ENCODE measurements at regions of chr12 and their contacts with region 1.

Region 1: GRCh38 chr12:32365473-32366064 is 33.8 kb upstream of the FGD4 start:
- DNase-seq: peak; percentile 55
- H3K4me3 ChIP-seq: no peak overlapping the region
- H3K27ac ChIP-seq: no peak overlapping the region
- H3K4me1 ChIP-seq: peaks cover 0 to 5% of the 10 kb centered on the region in 2 experiments; a peak in 3 of 4 replicates
- H3K27me3 ChIP-seq: no peaks in the 10 kb centered on the region
- CTCF ChIP-seq: peak; percentile 93
- EP300 ChIP-seq: no peak
- RAD21 ChIP-seq: peak; percentile 88

Region 2: GRCh38 chr12:32252199-32253073 is 113.1 kb before region 1 on chr12:
- CTCF ChIA-PET with region 1: no interaction called
- POLR2A ChIA-PET with region 1: no interaction called
- DNase-seq: no peak
- H3K4me3 ChIP-seq: no peak overlapping the region
- H3K27ac ChIP-seq: no peak overlapping the region
- H3K4me1 ChIP-seq: peaks cover 0 to 9% of the 10 kb centered on the region in 2 experiments; a peak in 1 of 4 replicates
- H3K27me3 ChIP-seq: no peaks in the 10 kb centered on the region
- CTCF ChIP-seq: no peak
- EP300 ChIP-seq: no peak
- RAD21 ChIP-seq: no peak

Region 3: DNA sequence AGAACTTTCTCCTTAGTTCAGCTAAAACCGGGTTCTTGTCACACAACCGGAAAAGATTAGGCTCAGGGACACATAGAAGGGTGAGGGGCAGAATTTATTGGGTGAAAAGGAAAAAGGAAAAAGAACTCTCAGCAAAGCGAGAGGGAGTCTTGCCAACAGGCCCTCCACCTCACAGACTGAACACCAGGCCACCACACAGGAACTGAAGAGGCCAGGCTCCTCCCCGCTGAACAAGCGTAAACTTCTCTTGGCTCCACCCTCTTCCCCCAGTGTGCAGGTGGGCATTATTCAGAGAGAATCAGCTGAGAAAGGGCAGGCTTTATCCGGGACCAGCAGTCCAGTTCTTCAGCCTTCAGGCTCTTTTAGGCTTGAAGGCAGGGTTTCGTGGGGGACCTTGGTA is 91.9 kb before region 1 on chr12:
- CTCF ChIA-PET with region 1: no interaction called
- POLR2A ChIA-PET with region 1: no interaction called
- DNase-seq: no peak
- H3K4me3 ChIP-seq: no peak overlapping the region
- H3K27ac ChIP-seq: no peak overlapping the region; a peak in 1 of 4 replicates
- H3K4me1 ChIP-seq: peaks cover 19 to 29% of the 10 kb centered on the region in 2 experiments
- H3K27me3 ChIP-seq: no peaks in the 10 kb centered on the region
- CTCF ChIP-seq: no peak
- EP300 ChIP-seq: no peak
- RAD21 ChIP-seq: no peak

Region 4: GRCh38 chr12:32353540-32353939 is 12.0 kb before region 1 on chr12:
- CTCF ChIA-PET with region 1: interaction called, 11 read pairs
- POLR2A ChIA-PET with region 1: no interaction called
- DNase-seq: no peak
- H3K4me3 ChIP-seq: no peak overlapping the region
- H3K27ac ChIP-seq: no peak overlapping the region
- H3K4me1 ChIP-seq: no peaks in the 10 kb centered on the region
- H3K27me3 ChIP-seq: no peaks in the 10 kb centered on the region
- CTCF ChIP-seq: no peak
- EP300 ChIP-seq: no peak
- RAD21 ChIP-seq: no peak

Region 5: DNA sequence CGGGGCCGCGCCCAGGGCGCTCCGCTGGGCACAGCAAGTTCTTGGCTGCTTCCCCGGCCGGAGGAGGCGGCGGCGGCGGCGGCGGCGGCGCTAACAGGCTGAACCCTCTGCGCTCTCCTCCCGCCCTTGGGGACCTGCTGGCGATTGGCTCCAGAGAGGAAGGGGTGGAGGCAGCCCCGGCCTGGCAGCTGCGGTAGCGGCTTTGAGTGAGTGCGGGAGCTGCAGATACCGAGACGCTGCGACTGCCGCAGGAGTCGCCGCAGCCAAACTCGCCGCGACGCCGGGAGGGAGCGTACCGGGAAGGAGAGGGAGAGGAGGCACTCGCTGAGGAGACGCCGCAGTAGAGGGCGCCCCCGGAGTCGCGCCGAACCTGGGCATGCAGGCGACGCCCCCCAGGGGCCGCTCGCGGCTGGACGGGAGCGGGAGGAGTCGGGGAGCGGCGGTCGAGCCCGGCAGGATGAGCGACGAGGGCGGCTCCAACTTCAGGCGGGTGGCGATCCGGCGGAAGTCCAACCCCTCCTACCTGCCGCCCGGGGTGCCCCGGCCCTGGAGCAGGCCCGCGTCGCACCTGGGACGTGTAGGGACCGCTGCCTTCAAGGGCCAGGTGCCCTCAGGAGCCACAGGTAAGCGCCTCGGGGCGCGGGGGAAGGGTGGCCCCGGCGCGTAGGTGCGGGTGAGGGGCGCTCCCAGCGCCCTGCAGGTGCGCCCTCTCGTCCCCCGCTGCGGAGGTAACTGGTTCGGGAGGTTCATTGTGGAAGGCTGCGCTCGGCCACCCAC is 34.0 kb after region 1 on chr12 and contains the start of gene FGD4:
- CTCF ChIA-PET with region 1: interaction called, 12 read pairs
- POLR2A ChIA-PET with region 1: no interaction called
- DNase-seq: peak; percentile 94
- H3K4me3 ChIP-seq: peak within 1 kb of the TSS; percentile 63 to 73
- H3K27ac ChIP-seq: no peak within 1 kb of the TSS
- H3K4me1 ChIP-seq: peaks cover 0 to 9% of the 10 kb centered on the region in 2 experiments; a peak in 1 of 4 replicates
- H3K27me3 ChIP-seq: peaks cover 18% of the 10 kb centered on the region
- CTCF ChIP-seq: peak; percentile 47
- EP300 ChIP-seq: no peak
- RAD21 ChIP-seq: no peak
- polyA plus RNA-seq, gene FGD4: 0.26 and 0.44 TPM in 2 replicates

Measured in SK-N-SH (cell line).